Activated CD4-positive, alpha-beta T cell treated with anti-CD3 and anti-CD28 coated beads, Interleukin-2, amount 10 ng/mL, durations not matched to agents 24 days and 14 days (primary cell): ENCODE measurements at regions of chr20 and their contacts with region 1.

Region 1: GRCh38 chr20:21505161-21505809 is 8.6 kb downstream of the NKX2-2 start:
- DNase-seq: peak; percentile 93
- H3K4me3 Mint-ChIP-seq: peak overlapping the region; percentile 63
- H3K27ac Mint-ChIP-seq: peak overlapping the region; percentile 51
- H3K4me1 Mint-ChIP-seq: peaks cover 18% of the 10 kb centered on the region
- H3K27me3 Mint-ChIP-seq: peaks cover 47% of the 10 kb centered on the region

Region 2: GRCh38 chr20:20837574-20838021 is 667.7 kb before region 1 on chr20:
- intact Hi-C with region 1: loop called (anchors 1 kb)
- DNase-seq: peak; percentile 79
- H3K4me3 Mint-ChIP-seq: no peak overlapping the region
- H3K27ac Mint-ChIP-seq: no peak overlapping the region
- H3K4me1 Mint-ChIP-seq: peaks cover 3% of the 10 kb centered on the region
- H3K27me3 Mint-ChIP-seq: peaks cover 14% of the 10 kb centered on the region

Region 3: GRCh38 chr20:20860078-20860806 is 645.0 kb before region 1 on chr20:
- intact Hi-C with region 1: loop called (anchors 1 kb)
- DNase-seq: peak; percentile 95
- H3K4me3 Mint-ChIP-seq: no peak overlapping the region
- H3K27ac Mint-ChIP-seq: no peak overlapping the region
- H3K4me1 Mint-ChIP-seq: no peaks in the 10 kb centered on the region
- H3K27me3 Mint-ChIP-seq: peaks cover 9% of the 10 kb centered on the region

Region 4: DNA sequence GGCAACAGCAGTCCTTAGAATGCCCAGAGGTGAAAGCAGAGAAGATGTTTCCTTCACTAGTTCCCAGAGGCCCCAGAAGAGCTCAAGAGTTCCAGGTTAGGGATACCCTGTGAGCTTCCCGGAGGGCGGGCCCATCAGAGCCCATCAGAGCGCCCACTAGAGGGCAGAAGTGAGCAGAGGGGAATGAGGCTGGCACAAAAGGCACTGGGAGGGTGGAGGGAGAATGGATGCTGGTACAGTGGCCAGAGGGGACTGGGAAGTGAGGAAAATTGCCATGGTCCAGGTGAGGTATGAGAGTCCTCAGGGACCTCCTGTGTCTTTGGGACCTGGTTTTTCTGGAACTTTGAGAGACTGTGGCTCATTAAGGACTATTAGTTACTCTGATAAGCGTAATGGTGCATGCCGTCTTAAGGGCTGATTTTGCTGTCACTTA is 456.4 kb before region 1 on chr20:
- intact Hi-C with region 1: loop called (anchors 2 kb)
- DNase-seq: peak; percentile 86
- H3K4me3 Mint-ChIP-seq: no peak overlapping the region
- H3K27ac Mint-ChIP-seq: no peak overlapping the region
- H3K4me1 Mint-ChIP-seq: no peaks in the 10 kb centered on the region
- H3K27me3 Mint-ChIP-seq: peaks cover 5% of the 10 kb centered on the region

Region 5: DNA sequence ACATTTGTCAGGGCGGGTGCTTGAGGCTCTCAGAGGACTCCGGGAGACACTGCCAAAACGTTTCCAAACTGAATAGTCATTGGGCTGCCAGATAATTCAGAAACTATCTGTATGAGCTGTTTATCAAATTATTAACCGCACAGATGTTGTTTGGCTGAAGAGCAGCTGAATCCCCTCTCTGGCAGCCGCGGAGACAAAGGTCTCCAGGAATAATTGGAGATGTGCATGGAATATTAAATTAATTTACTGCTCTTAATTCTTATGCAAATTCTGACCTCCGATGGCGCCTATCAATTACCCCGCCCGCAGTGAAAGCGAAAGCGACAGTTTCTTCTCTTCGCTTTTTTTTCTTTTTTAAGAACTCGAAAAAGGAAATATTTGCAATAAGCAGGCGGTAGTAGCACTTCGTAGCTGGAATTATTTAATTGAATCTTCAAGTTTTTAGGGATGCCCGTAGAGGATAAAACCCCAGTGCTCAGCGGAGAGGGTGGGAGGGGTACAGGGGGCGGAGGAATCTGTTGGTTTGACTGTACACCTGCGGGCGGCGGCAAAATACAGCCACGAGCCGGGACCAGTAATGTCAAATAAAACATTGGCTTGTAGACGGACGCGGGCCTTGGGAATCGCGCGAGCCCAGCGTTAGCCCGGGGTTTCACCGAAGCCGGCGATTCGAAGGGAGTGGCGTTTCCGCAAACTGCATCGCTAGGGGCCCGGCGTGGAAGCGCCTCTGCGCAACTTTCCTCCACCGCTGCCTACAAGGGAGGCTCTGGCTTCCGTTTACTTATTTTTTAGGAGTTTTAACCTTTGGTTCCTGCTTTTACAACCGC is 405.3 kb before region 1 on chr20:
- intact Hi-C with region 1: loop called (anchors 2 kb)
- DNase-seq: peak; percentile 87
- H3K4me3 Mint-ChIP-seq: peak overlapping the region; percentile 89
- H3K27ac Mint-ChIP-seq: peak overlapping the region; percentile 92
- H3K4me1 Mint-ChIP-seq: peaks cover 36% of the 10 kb centered on the region
- H3K27me3 Mint-ChIP-seq: peaks cover 79% of the 10 kb centered on the region

Region 6: GRCh38 chr20:21235484-21236445 is 269.5 kb before region 1 on chr20:
- intact Hi-C with region 1: loop called (anchors 1 kb)
- DNase-seq: peak; percentile 89
- H3K4me3 Mint-ChIP-seq: no peak overlapping the region
- H3K27ac Mint-ChIP-seq: no peak overlapping the region
- H3K4me1 Mint-ChIP-seq: peaks cover 2% of the 10 kb centered on the region
- H3K27me3 Mint-ChIP-seq: no peaks in the 10 kb centered on the region

Region 7: GRCh38 chr20:21520702-21521595 is 15.7 kb after region 1 on chr20:
- intact Hi-C with region 1: loop called (anchors 2 kb)
- DNase-seq: peak; percentile 61
- H3K4me3 Mint-ChIP-seq: peak overlapping the region; percentile 23
- H3K27ac Mint-ChIP-seq: peak overlapping the region; percentile 80
- H3K4me1 Mint-ChIP-seq: peaks cover 18% of the 10 kb centered on the region
- H3K27me3 Mint-ChIP-seq: peaks cover 87% of the 10 kb centered on the region

Region 8: DNA sequence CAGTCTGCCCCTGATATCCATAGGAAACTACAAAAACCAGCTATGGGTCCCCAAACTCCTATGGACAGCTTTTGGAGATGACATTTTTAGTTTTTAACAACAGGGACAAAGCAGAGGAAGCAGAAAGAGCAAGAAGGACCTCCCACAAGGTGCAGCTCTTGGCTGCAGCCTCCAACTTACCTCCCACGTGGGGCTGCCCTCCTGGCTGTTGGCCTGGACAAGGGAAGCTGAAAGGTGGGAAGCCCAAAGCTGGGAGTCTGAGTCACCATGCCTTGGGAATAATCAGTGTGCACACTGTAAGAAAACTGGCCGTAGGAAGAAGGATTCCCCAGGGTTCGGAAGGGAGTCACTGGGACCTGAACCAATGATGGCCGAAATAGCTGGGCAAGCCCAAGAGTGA is 148.3 kb after region 1 on chr20:
- intact Hi-C with region 1: no loop called
- DNase-seq: no peak
- H3K4me3 Mint-ChIP-seq: no peak overlapping the region
- H3K27ac Mint-ChIP-seq: no peak overlapping the region
- H3K4me1 Mint-ChIP-seq: no peaks in the 10 kb centered on the region
- H3K27me3 Mint-ChIP-seq: peaks cover 2% of the 10 kb centered on the region

Region 9: GRCh38 chr20:21739682-21740081 is 234.4 kb after region 1 on chr20:
- intact Hi-C with region 1: no loop called
- DNase-seq: no peak
- H3K4me3 Mint-ChIP-seq: no peak overlapping the region
- H3K27ac Mint-ChIP-seq: no peak overlapping the region
- H3K4me1 Mint-ChIP-seq: no peaks in the 10 kb centered on the region
- H3K27me3 Mint-ChIP-seq: no peaks in the 10 kb centered on the region